ENCODE measurements at regions of chr21 and their contacts with region 1.

Region 1: GRCh38 chr21:39388038-39388810 is 39.3 kb upstream of the HMGN1 start:
- DNase-seq: peak; percentile 94
- ATAC-seq: peak; percentile 76
- H3K4me3 Mint-ChIP-seq: peak overlapping the region; percentile 91
- H3K27ac Mint-ChIP-seq: peak overlapping the region; percentile 89
- H3K4me1 Mint-ChIP-seq: peaks cover 27% of the 10 kb centered on the region
- H3K27me3 Mint-ChIP-seq: no peaks in the 10 kb centered on the region

Region 2: GRCh38 chr21:39183237-39184007 is 204.8 kb before region 1 on chr21 and contains the start of gene PSMG1:
- POLR2A ChIA-PET with region 1: interaction called, 15 read pairs
- DNase-seq: peak; percentile 98
- ATAC-seq: peak; percentile 90
- H3K4me3 Mint-ChIP-seq: peak within 1 kb of the TSS; percentile 97
- H3K27ac Mint-ChIP-seq: peak within 1 kb of the TSS; percentile 97
- H3K4me1 Mint-ChIP-seq: peaks cover 30% of the 10 kb centered on the region
- H3K27me3 Mint-ChIP-seq: no peaks in the 10 kb centered on the region
- total RNA-seq, gene PSMG1: 40.7 to 42.3 TPM

Measured in activated naive CD8-positive, alpha-beta T cell treated with anti-CD3 and anti-CD28 coated beads, Interleukin-2, amount 10 ng/mL, durations not matched to agents 7 days and 5 days (primary cell).